ENCODE measurements at regions of chr1 and their contacts with region 1.

Region 1: GRCh38 chr1:84164567-84165021 is 20.5 kb downstream of the PRKACB start:
- DNase-seq: no peak
- ATAC-seq: peak; percentile 82
- H3K4me3 ChIP-seq: peak overlapping the region; percentile 36 to 53
- H3K27ac ChIP-seq: peak overlapping the region; percentile 89
- H3K4me1 ChIP-seq: peaks cover 27% of the 10 kb centered on the region; the same call in 1 of the 2 replicates
- H3K27me3 ChIP-seq: no peaks in the 10 kb centered on the region
- CTCF ChIP-seq: no peak

Region 2: GRCh38 chr1:83725736-83726360 is 438.7 kb before region 1 on chr1:
- CTCF ChIA-PET with region 1: no interaction called
- POLR2A ChIA-PET with region 1: interaction called, 11 read pairs
- in situ Hi-C with region 1: no loop called
- intact Hi-C with region 1: no loop called
- DNase-seq: no peak
- ATAC-seq: no peak; the same call in 1 of the 2 replicates
- H3K4me3 ChIP-seq: no peak overlapping the region
- H3K27ac ChIP-seq: no peak overlapping the region
- H3K4me1 ChIP-seq: no peaks in the 10 kb centered on the region
- H3K27me3 ChIP-seq: no peaks in the 10 kb centered on the region
- CTCF ChIP-seq: no peak

Region 3: GRCh38 chr1:84301004-84301784 is 136.6 kb after region 1 on chr1 and contains the start of gene SAMD13:
- CTCF ChIA-PET with region 1: interaction called, 3 read pairs
- POLR2A ChIA-PET with region 1: interaction called, 6 read pairs
- in situ Hi-C with region 1: no loop called
- intact Hi-C with region 1: loop called (anchors 5 kb)
- DNase-seq: peak; percentile 85
- ATAC-seq: no peak
- H3K4me3 ChIP-seq: peak within 1 kb of the TSS; percentile 37 to 67
- H3K27ac ChIP-seq: peak within 1 kb of the TSS; percentile 79
- H3K4me1 ChIP-seq: peaks cover 50% of the 10 kb centered on the region
- H3K27me3 ChIP-seq: no peaks in the 10 kb centered on the region
- CTCF ChIP-seq: no peak
- total RNA-seq, gene SAMD13: 2.2 TPM